Activated CD4-positive, alpha-beta memory T cell treated with anti-CD3 and anti-CD28 coated beads for 36 hours (primary cell): ENCODE measurements at regions of chr19 and their contacts with region 1.

Region 1: DNA sequence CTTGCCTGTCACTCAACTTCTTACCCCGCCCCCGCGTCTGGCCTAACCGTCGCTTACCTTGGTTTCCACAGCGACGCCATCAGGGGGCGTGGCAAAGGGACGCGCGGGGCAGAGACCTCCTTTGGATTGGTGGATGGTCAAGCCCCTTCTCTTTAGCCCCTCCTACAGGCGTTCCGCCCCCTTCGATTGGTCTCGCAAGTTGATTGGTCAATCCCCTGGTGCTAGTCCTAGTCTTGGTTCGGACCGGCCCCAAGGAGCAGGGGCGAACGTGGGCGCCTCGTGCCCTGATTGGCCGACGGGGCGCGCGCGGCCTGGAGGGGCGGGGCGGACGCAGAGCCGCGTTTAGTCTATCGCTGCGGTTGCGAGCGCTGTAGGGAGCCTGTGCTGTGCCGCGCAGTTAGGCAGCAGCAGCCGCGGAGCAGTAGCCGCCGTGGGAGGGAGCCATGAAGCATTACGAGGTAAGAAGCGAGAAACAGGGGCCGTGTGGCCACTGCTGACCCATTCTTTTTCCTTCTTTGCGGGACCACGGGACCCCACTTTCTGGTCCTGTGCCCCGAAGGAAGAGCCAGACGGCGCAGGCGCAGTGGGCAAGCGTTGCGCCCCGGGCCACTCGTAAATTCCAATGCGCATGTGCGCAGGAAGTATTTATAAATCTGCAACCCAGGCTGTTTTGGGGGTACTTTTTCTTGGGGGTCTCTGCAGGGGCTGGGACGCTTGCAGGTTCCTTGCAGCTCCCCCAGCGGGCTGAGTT is at the start of gene TECR:
- DNase-seq: peak; percentile 100
- H3K4me3 Mint-ChIP-seq: peak within 1 kb of the TSS; percentile 98
- H3K27ac Mint-ChIP-seq: peak within 1 kb of the TSS; percentile 95
- H3K4me1 Mint-ChIP-seq: peaks cover 33% of the 10 kb centered on the region
- H3K27me3 Mint-ChIP-seq: no peaks in the 10 kb centered on the region
- total RNA-seq, gene TECR: 120 TPM

Region 2: DNA sequence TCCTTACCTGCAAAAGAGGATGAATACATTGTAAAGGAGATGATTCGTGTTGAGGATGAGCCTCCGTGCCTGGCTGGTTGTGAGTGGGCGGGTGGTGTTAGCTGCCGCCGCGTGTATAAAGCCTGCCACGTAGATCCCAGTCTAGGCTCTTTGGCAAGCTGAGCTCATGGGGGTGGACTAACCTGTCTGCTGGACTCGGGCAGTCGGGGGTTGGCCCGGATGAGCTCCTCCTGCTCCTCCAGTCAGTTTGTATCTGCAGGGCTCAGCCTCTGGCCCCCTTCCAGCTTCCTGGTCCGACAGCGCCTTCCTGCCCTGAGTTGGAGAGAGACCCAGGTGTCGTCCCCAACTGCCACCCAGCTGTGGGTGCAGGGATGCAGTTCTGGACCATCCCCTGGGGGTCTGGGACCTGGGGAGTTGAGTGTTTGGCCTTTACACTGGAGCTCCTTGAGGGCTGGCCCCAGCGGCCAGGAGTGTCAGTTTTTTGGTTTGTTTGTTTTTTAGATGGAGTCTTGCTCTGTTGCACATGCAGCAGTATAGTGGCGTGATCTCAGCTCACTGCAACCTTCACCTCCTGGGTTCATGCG is 20.9 kb after region 1 on chr19:
- CTCF ChIA-PET with region 1: interaction called, 11 read pairs
- POLR2A ChIA-PET with region 1: no interaction called
- intact Hi-C with region 1: loop called (anchors 2 kb)
- DNase-seq: no peak
- H3K4me3 Mint-ChIP-seq: no peak overlapping the region
- H3K27ac Mint-ChIP-seq: peak overlapping the region; percentile 61
- H3K4me1 Mint-ChIP-seq: peaks cover 39% of the 10 kb centered on the region
- H3K27me3 Mint-ChIP-seq: no peaks in the 10 kb centered on the region